Adrenal gland (tissue), 19 donors: ENCODE measurements at regions of chr19 and their contacts with region 1.

Region 1: DNA sequence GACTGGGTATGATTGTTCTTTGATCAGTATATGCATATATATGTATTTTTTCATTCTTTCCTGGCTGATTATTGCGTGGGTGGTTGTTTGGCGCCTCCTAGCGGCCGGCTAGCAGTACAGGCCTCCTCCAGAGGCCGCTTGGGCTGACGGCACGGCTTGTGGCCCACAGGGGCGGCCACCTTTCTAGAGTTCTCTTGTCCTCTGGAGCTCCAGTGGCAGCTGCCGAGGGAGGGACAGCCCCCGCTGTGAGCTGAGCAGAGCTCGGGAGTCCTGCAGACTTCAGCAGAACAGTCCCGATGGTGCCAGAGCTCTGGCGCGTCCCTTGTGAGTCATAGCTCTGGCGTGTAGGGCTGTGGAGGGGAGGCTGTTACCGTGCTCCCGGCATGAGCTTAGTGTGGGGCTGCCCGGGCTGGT is 22.5 kb upstream of the ZNF429 start:
- DNase-seq: peak; percentile 36 to 80 (median 69)
- H3K4me3 ChIP-seq: no peak overlapping the region
- H3K27ac ChIP-seq: peak overlapping the region in 3 of 5 donors; percentile 6 to 27 (median 13)
- H3K4me1 ChIP-seq: no peaks in the 10 kb centered on the region
- H3K27me3 ChIP-seq: no peaks in the 10 kb centered on the region
- CTCF ChIP-seq: peak; percentile 66 to 87 (median 78)
- POLR2A ChIP-seq: peak in 1 of 2 donors; percentile 19

Region 2: DNA sequence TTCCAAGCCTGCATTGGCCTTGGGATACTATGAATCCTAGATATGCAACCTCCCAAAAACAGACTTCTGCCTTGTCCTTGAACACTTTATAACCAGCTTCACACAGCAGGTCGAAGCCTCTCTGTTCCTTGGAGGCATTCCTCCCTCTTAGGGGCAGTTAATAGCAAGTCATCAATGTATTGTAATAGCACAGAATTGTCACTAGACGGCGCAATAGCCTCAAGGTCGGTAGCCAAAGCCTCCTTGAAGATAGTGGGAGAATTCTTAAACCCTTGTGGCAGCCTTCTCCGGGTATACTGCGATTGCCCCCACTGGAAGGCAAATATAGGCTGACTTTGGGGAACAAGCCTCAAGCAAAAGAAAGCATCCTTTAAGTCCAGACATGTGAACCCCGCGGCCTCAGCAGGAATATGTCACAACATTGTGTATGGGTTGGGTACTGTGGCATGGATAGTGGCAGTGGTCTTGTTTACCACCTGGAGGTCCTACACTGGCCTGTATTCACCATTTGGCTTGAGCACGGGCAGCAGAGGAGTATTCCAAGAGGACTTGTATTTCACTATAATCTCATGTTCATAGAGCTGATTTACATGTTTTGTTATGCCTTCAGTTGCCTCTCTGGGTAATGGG is 279.9 kb before region 1 on chr19:
- intact Hi-C with region 1: loop called in 1 of 2 experiments (anchors 5 kb)
- DNase-seq: peak in 1 of 7 donors; percentile 16
- H3K4me3 ChIP-seq: no peak overlapping the region
- H3K27ac ChIP-seq: no peak overlapping the region
- H3K4me1 ChIP-seq: peaks cover 7 to 11% of the 10 kb centered on the region in 2 donors
- H3K27me3 ChIP-seq: no peaks in the 10 kb centered on the region
- CTCF ChIP-seq: peak; percentile 48 to 73 (median 58)
- POLR2A ChIP-seq: no peak